MCF 10A (cell line): ENCODE measurements at regions of chr10 and their contacts with region 1.

Region 1: GRCh38 chr10:47340608-47341170 is 7.5 kb upstream of the RBP3 start:
- DNase-seq: peak; percentile 60
- H3K4me3 Mint-ChIP-seq: no peak overlapping the region
- H3K27ac Mint-ChIP-seq: no peak overlapping the region
- H3K4me1 Mint-ChIP-seq: no peaks in the 10 kb centered on the region
- H3K27me3 Mint-ChIP-seq: peaks cover 51% of the 10 kb centered on the region
- CTCF ChIP-seq: peak; percentile 93

Region 2: GRCh38 chr10:47146572-47146971 is 194.1 kb before region 1 on chr10:
- CTCF ChIA-PET with region 1: no interaction called
- POLR2A ChIA-PET with region 1: no interaction called
- intact Hi-C with region 1: no loop called
- DNase-seq: no peak
- H3K4me3 Mint-ChIP-seq: no peak overlapping the region
- H3K27ac Mint-ChIP-seq: no peak overlapping the region
- H3K4me1 Mint-ChIP-seq: no peaks in the 10 kb centered on the region
- H3K27me3 Mint-ChIP-seq: peaks cover 15% of the 10 kb centered on the region
- CTCF ChIP-seq: no peak

Region 3: GRCh38 chr10:47354162-47354561 is 13.5 kb after region 1 on chr10:
- CTCF ChIA-PET with region 1: interaction called, 11 read pairs
- POLR2A ChIA-PET with region 1: no interaction called
- intact Hi-C with region 1: no loop called
- DNase-seq: no peak
- H3K4me3 Mint-ChIP-seq: no peak overlapping the region
- H3K27ac Mint-ChIP-seq: no peak overlapping the region
- H3K4me1 Mint-ChIP-seq: no peaks in the 10 kb centered on the region
- H3K27me3 Mint-ChIP-seq: no peaks in the 10 kb centered on the region
- CTCF ChIP-seq: no peak